ENCODE measurements at regions of chr18 and their contacts with region 1.

Region 1: DNA sequence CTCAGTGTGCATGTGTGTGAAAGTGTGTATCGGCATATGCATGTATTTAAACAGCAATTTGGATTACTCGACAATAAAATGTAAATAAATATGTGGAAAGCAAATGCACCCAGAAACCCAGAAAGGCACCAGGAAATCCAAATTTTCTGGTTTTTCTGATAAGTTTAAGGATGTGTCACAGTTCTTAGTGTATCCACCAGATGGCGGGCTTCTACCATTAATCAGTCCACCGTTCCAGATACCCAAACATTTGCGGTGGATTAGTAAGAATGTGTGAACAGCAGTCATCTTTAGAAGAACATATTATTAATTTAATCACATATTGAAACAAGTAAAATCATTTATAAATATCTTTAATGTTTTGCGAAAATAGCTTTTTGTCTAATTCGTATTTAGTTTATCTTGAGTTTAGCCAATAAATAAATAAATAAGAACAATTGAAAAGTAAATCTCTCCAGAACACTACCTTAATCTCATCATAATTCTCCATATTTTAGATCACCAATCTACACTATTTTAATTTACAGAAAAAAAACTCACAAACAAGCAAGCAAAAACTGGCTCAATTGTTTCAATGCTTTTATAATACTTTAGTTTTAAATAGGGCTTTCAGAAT is 298.9 kb downstream of the DSEL start:
- DNase-seq: peak; percentile 43
- H3K4me3 ChIP-seq: no peak overlapping the region
- H3K27ac ChIP-seq: no peak overlapping the region
- H3K4me1 ChIP-seq: no peaks in the 10 kb centered on the region
- CTCF ChIP-seq: peak; percentile 74

Region 2: DNA sequence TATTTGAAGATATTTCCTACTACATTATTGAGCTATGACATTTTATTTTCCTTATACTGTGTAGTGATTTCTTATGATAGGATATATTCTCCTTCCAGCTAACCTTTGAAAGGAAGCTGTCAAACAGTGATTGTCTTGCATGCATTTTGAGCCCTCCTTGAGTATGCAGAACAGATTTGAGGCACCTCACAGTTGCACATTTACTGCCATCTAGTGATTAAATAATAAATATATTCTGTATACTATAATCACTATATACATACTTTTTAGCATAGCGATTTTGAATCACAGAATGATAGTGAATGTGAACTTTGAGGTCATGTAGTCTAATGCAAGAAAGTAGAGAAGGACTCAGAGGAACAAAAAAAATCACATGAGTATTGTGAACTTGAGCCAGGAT is 345.4 kb before region 1 on chr18:
- CTCF ChIA-PET with region 1: no interaction called
- POLR2A ChIA-PET with region 1: no interaction called
- intact Hi-C with region 1: no loop called
- DNase-seq: peak; percentile 0
- H3K4me3 ChIP-seq: no peak overlapping the region
- H3K27ac ChIP-seq: no peak overlapping the region
- H3K4me1 ChIP-seq: no peaks in the 10 kb centered on the region
- CTCF ChIP-seq: no peak; the same call in 1 of the 2 replicates

Region 3: GRCh38 chr18:68660354-68661183 is 1442.9 kb after region 1 on chr18:
- CTCF ChIA-PET with region 1: no interaction called
- POLR2A ChIA-PET with region 1: no interaction called
- intact Hi-C with region 1: loop called (anchors 5 kb)
- DNase-seq: peak; percentile 37
- H3K4me3 ChIP-seq: no peak overlapping the region
- H3K27ac ChIP-seq: no peak overlapping the region
- H3K4me1 ChIP-seq: no peaks in the 10 kb centered on the region
- CTCF ChIP-seq: peak; percentile 72

Region 4: GRCh38 chr18:68735483-68736343 is 1518.1 kb after region 1 on chr18:
- CTCF ChIA-PET with region 1: no interaction called
- POLR2A ChIA-PET with region 1: no interaction called
- intact Hi-C with region 1: loop called (anchors 5 kb)
- DNase-seq: peak; percentile 14
- H3K4me3 ChIP-seq: no peak overlapping the region
- H3K27ac ChIP-seq: no peak overlapping the region
- H3K4me1 ChIP-seq: no peaks in the 10 kb centered on the region
- CTCF ChIP-seq: peak; percentile 77